ENCODE measurements at regions of chr11 and their contacts with region 1.

Region 1: DNA sequence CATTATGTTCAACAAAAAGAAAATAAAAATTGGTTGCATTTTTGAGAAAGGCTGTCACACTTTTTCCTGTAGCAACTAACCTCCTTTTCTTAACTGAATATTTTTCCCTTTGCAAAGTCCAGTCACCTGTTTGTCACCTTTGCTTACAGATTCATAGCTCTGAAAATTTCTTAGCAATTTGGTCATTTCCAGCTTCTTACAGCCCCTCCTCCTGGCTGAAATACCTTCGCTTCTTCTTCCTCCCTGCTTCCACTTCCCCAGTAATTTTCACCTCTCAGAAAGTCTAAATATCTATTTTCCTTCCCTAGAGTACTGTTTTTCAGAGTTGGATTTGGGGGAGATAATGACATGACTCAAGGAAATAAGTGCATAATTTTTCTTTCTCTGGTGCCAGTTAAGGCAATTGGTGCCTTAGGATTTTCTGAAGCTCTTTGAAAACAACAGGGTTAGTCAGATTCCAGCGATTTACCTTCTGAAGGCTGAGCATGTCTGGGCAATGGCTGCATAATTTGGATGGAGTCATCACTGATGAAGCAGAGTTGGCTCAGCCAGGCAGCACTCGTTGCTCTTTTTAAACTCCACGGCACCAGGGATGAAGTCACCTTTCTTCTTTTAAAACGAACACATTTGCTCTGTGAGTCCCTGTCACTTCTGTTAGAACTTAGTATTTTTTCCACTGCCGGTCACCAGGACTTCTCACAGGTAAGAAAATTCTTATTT is 62.1 kb upstream of the AMOTL1 start:
- DNase-seq: no peak
- H3K4me3 ChIP-seq: no peak overlapping the region
- H3K4me3 Mint-ChIP-seq: peak overlapping the region; percentile 34
- H3K27ac Mint-ChIP-seq: peak overlapping the region; percentile 63
- H3K4me1 ChIP-seq: peaks cover 36% of the 10 kb centered on the region
- H3K4me1 Mint-ChIP-seq: peaks cover 26% of the 10 kb centered on the region
- H3K27me3 ChIP-seq: no peaks in the 10 kb centered on the region
- H3K27me3 Mint-ChIP-seq: no peaks in the 10 kb centered on the region
- CTCF ChIP-seq: no peak

Region 2: DNA sequence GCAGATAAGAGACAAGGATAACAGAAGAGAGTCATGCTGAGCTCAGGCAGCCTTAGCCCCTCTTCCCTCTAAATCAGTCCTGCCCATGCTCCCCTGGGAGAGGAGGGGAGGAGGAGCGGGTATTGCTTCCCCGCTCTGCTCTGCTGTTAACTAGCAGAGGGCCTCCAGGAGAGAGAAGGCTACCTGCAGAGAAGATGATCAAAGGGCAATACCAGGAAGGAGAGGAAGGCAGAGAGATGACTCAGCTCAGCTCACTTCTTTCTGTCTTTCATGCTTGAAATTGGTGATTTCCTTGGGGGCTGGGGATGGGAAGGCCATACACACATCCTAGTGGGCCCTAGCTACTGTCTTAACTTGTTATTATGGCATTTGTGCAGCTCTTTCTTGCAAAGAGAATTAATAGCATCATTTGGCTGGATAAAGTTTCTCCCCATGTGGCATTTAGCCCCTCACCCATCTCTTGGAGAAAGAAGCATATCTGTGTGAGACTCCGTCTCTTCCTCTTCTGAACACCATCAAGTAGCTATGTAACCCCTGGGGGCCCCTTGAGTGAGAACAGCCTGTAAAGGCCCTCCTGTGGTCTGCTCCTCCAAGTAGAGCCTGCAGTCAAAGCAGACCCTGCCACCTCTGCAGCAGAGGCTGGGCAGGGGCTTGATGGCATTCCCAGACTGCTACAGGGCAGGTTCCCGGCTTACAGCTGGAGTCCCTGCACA is 28.7 kb after region 1 on chr11:
- CTCF ChIA-PET with region 1: interaction called, 3 read pairs
- POLR2A ChIA-PET with region 1: no interaction called
- intact Hi-C with region 1: loop called (anchors 1 kb)
- DNase-seq: no peak
- H3K4me3 ChIP-seq: no peak overlapping the region
- H3K4me3 Mint-ChIP-seq: no peak overlapping the region
- H3K27ac Mint-ChIP-seq: peak overlapping the region; percentile 7
- H3K4me1 ChIP-seq: peaks cover 55% of the 10 kb centered on the region
- H3K4me1 Mint-ChIP-seq: peaks cover 11% of the 10 kb centered on the region
- H3K27me3 ChIP-seq: no peaks in the 10 kb centered on the region
- H3K27me3 Mint-ChIP-seq: no peaks in the 10 kb centered on the region
- CTCF ChIP-seq: no peak

Region 3: GRCh38 chr11:94762208-94762607 is 56.2 kb after region 1 on chr11:
- CTCF ChIA-PET with region 1: no interaction called
- POLR2A ChIA-PET with region 1: no interaction called
- intact Hi-C with region 1: loop called (anchors 2 kb)
- DNase-seq: peak in 1 of 2 experiments; percentile 58
- H3K4me3 ChIP-seq: no peak overlapping the region
- H3K4me3 Mint-ChIP-seq: no peak overlapping the region
- H3K27ac Mint-ChIP-seq: no peak overlapping the region
- H3K4me1 ChIP-seq: peaks cover 31% of the 10 kb centered on the region
- H3K4me1 Mint-ChIP-seq: peaks cover 12% of the 10 kb centered on the region
- H3K27me3 ChIP-seq: no peaks in the 10 kb centered on the region
- H3K27me3 Mint-ChIP-seq: no peaks in the 10 kb centered on the region
- CTCF ChIP-seq: peak; percentile 49 to 73

Measured in Caco-2 (cell line).